ENCODE measurements at regions of chr11 and their contacts with region 1.

Region 1: GRCh38 chr11:32385998-32386397 is 49.3 kb downstream of the WT1 start:
- DNase-seq: peak; percentile 65
- H3K4me3 Mint-ChIP-seq: no peak overlapping the region
- H3K27ac Mint-ChIP-seq: no peak overlapping the region
- H3K4me1 Mint-ChIP-seq: no peaks in the 10 kb centered on the region
- H3K27me3 Mint-ChIP-seq: peaks cover 6% of the 10 kb centered on the region
- CTCF ChIP-seq: peak; percentile 28

Region 2: GRCh38 chr11:31725176-31725575 is 660.8 kb before region 1 on chr11:
- CTCF ChIA-PET with region 1: no interaction called
- POLR2A ChIA-PET with region 1: no interaction called
- intact Hi-C with region 1: no loop called
- DNase-seq: no peak
- H3K4me3 Mint-ChIP-seq: no peak overlapping the region
- H3K27ac Mint-ChIP-seq: no peak overlapping the region
- H3K4me1 Mint-ChIP-seq: no peaks in the 10 kb centered on the region
- H3K27me3 Mint-ChIP-seq: no peaks in the 10 kb centered on the region
- CTCF ChIP-seq: no peak

Region 3: GRCh38 chr11:32323814-32324130 is 62.2 kb before region 1 on chr11:
- CTCF ChIA-PET with region 1: interaction called, 21 read pairs
- POLR2A ChIA-PET with region 1: no interaction called
- intact Hi-C with region 1: no loop called
- DNase-seq: no peak
- H3K4me3 Mint-ChIP-seq: no peak overlapping the region
- H3K27ac Mint-ChIP-seq: no peak overlapping the region
- H3K4me1 Mint-ChIP-seq: no peaks in the 10 kb centered on the region
- H3K27me3 Mint-ChIP-seq: peaks cover 38% of the 10 kb centered on the region
- CTCF ChIP-seq: no peak

Region 4: DNA sequence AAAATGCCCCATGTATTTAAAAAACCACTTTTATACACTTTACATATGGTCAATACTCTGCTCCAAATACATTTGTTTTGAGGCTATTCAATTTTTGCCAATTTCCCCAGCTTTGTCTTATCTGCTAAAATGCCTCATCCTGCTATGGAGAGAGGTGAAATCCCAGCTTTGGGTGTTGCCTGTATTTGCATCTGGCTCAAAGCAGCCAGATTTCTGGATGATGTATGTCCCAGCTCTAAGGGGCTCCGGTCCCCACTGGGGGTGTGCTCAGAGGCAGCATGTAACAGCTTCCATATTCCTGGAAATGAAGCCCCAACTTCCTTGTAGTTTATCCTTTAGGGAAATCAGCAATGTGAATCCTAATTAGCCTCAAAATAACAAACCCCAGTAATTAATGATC is 10.2 kb before region 1 on chr11:
- CTCF ChIA-PET with region 1: interaction called, 12 read pairs
- POLR2A ChIA-PET with region 1: interaction called, 3 read pairs
- intact Hi-C with region 1: no loop called
- DNase-seq: no peak
- H3K4me3 Mint-ChIP-seq: no peak overlapping the region
- H3K27ac Mint-ChIP-seq: no peak overlapping the region
- H3K4me1 Mint-ChIP-seq: no peaks in the 10 kb centered on the region
- H3K27me3 Mint-ChIP-seq: no peaks in the 10 kb centered on the region
- CTCF ChIP-seq: no peak

Region 5: GRCh38 chr11:32583459-32584271 is 197.7 kb after region 1 on chr11 and contains the start of gene EIF3M:
- CTCF ChIA-PET with region 1: interaction called, 4 read pairs
- POLR2A ChIA-PET with region 1: no interaction called
- intact Hi-C with region 1: loop called (anchors 10 kb)
- DNase-seq: peak; percentile 96
- H3K4me3 Mint-ChIP-seq: peak within 1 kb of the TSS; percentile 96
- H3K27ac Mint-ChIP-seq: peak within 1 kb of the TSS; percentile 98
- H3K4me1 Mint-ChIP-seq: peaks cover 18% of the 10 kb centered on the region
- H3K27me3 Mint-ChIP-seq: no peaks in the 10 kb centered on the region
- CTCF ChIP-seq: no peak
- total RNA-seq, gene EIF3M: 356 and 443 TPM in 2 replicates

Measured in MCF 10A (cell line).